GM13976 (cell line): ENCODE measurements at regions of chr6 and their contacts with region 1.

Region 1: DNA sequence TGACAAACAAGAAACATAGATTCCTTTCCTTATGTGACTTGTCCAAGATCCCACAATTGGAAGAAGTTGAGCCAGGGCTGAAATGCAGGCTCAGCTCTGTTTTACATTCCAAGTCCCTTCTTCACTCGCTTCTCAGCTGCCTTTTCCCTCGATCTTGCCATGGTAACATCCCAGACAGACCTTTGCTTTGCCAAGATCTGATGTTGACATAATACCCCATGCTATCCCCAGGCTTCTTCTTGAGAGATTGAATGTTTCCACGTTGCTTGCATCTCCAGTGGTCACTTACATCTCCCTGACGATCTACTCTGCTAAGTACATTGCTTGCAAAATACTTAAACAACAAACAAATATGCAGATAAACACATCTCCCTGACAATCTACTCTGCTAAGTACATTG is 63.5 kb downstream of the TBXT start:
- DNase-seq: no peak
- CTCF ChIP-seq: no peak

Region 2: GRCh38 chr6:165872311-165872710 is 231.8 kb before region 1 on chr6:
- in situ Hi-C with region 1: no loop called
- DNase-seq: no peak
- CTCF ChIP-seq: no peak

Region 3: GRCh38 chr6:165884813-165885765 is 219.0 kb before region 1 on chr6:
- in situ Hi-C with region 1: loop called (anchors 5 kb)
- DNase-seq: peak; percentile 76
- CTCF ChIP-seq: peak; percentile 74

Region 4: DNA sequence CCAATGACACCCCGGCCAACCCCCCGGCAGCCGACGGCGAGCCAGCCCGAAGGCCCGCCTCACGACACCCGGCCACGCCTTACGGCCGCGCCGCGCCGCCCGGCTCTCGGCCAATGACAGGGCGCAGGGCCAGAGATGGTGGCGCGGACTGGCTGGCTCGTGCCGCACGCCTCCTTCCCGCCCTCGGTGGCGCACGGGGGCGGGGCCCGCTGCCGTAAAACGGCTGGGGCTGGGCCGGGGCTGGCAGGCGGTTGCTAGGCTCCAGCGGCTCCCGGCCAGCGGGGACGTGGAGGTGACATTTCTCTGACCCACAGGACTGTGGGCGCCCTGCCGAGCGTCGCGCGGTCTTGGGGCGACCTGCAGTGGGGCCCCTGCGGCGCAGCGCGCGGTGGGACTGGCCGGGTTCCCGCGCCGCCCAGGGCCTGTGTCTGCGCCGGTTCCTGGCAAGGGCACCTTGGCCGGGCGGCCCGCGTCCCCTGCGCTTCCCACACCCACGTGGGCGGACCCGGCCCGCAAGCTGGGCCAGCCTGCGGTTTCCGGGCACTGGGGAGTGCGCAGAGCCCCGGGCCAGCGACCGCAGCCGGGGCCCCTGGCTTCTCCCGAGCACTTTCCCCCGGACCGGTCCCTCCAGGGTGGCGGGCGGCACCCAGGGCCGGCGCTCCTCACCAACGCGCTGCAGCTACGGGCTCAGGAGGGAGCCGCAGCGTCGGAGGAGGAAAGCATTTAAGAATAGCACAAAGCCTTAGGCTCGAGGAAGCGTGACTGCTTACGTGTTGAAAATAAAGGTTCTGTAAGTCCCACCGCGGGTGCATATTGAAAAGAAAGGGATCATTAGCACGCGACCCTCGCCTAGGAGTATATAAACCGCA is 279.1 kb after region 1 on chr6 and contains the start of gene MPC1:
- in situ Hi-C with region 1: no loop called
- DNase-seq: peak; percentile 97
- CTCF ChIP-seq: peak; percentile 20